MCF 10A (cell line): ENCODE measurements at regions of chr5 and their contacts with region 1.

Region 1: GRCh38 chr5:119302916-119303897 is 52.6 kb upstream of the TNFAIP8 start:
- DNase-seq: peak; percentile 94
- H3K4me3 Mint-ChIP-seq: peak overlapping the region; percentile 52
- H3K27ac Mint-ChIP-seq: peak overlapping the region; percentile 91
- H3K4me1 Mint-ChIP-seq: peaks cover 33% of the 10 kb centered on the region
- H3K27me3 Mint-ChIP-seq: no peaks in the 10 kb centered on the region
- CTCF ChIP-seq: no peak

Region 2: DNA sequence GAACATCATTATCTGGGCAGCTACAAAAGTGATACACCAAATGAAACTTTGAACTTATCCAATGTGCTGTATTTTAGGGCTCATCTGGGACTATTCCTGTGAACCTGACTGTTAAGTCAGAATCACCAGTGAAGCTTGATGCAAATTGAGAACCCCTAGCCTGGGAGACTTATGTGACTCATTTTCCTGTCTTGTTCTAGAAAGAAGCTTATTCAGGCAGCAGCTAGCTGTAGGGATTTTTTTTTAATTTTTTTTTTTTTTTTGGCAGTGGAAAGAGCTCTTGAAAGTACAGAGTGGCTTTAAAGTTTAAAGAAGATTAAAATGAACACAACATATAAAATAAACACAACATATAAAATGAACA is 28.5 kb before region 1 on chr5:
- CTCF ChIA-PET with region 1: interaction called, 4 read pairs
- POLR2A ChIA-PET with region 1: interaction called, 21 read pairs
- intact Hi-C with region 1: loop called (anchors 2 kb)
- DNase-seq: peak; percentile 80
- H3K4me3 Mint-ChIP-seq: no peak overlapping the region
- H3K27ac Mint-ChIP-seq: peak overlapping the region; percentile 80
- H3K4me1 Mint-ChIP-seq: peaks cover 35% of the 10 kb centered on the region
- H3K27me3 Mint-ChIP-seq: no peaks in the 10 kb centered on the region
- CTCF ChIP-seq: no peak

Region 3: DNA sequence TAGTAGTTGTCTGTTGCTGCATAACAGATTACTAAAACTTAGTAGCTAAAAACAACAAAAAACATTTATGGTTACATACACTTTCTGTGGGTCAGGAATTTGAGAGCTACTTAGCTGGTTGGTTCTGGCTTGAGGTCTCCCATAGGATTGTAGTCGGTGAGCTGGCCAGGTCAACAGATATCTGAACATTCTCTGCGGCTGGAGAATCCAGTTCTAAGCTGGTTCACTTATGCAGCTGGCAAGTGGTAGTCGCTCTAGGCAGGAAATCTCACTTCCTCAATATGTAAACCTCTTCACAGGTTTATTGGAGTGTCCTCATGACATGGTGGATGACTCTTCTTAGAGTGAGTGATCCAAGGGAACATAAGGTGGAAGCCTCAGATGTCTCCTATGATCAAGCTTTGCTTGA is 13.0 kb before region 1 on chr5:
- CTCF ChIA-PET with region 1: interaction called, 9 read pairs
- POLR2A ChIA-PET with region 1: interaction called, 27 read pairs
- intact Hi-C with region 1: no loop called
- DNase-seq: no peak
- H3K4me3 Mint-ChIP-seq: no peak overlapping the region
- H3K27ac Mint-ChIP-seq: no peak overlapping the region
- H3K4me1 Mint-ChIP-seq: peaks cover 42% of the 10 kb centered on the region
- H3K27me3 Mint-ChIP-seq: no peaks in the 10 kb centered on the region
- CTCF ChIP-seq: no peak

Region 4: GRCh38 chr5:119315516-119315949 is 12.3 kb after region 1 on chr5:
- CTCF ChIA-PET with region 1: interaction called, 32 read pairs
- POLR2A ChIA-PET with region 1: interaction called, 6 read pairs
- intact Hi-C with region 1: no loop called
- DNase-seq: peak; percentile 82
- H3K4me3 Mint-ChIP-seq: no peak overlapping the region
- H3K27ac Mint-ChIP-seq: no peak overlapping the region
- H3K4me1 Mint-ChIP-seq: no peaks in the 10 kb centered on the region
- H3K27me3 Mint-ChIP-seq: no peaks in the 10 kb centered on the region
- CTCF ChIP-seq: peak; percentile 39

Region 5: GRCh38 chr5:119322948-119323537 is 19.8 kb after region 1 on chr5:
- CTCF ChIA-PET with region 1: interaction called, 16 read pairs
- POLR2A ChIA-PET with region 1: interaction called, 16 read pairs
- intact Hi-C with region 1: no loop called
- DNase-seq: peak; percentile 54
- H3K4me3 Mint-ChIP-seq: no peak overlapping the region
- H3K27ac Mint-ChIP-seq: peak overlapping the region; percentile 98
- H3K4me1 Mint-ChIP-seq: peaks cover 44% of the 10 kb centered on the region
- H3K27me3 Mint-ChIP-seq: no peaks in the 10 kb centered on the region
- CTCF ChIP-seq: no peak

Region 6: DNA sequence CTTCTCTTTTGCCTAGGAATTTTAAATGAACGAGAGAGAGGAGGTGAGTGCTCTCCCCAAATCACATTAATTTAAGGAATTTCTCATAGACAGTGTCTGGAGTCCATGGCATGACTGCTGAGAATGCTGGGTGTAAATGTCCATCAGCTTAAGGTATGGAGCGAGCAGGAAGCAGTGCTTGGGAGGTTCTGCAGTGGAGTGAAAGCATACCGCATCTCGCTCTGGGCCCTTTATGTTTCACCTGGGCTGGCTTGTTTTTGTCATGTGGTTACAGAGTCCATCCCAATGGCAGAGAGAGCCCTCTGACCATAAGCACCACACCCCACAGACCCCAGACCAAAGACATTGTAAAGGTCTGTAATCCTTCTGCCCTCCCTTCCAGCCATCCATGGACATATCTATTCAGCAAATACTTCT is 32.1 kb after region 1 on chr5:
- CTCF ChIA-PET with region 1: interaction called, 10 read pairs
- POLR2A ChIA-PET with region 1: interaction called, 28 read pairs
- intact Hi-C with region 1: no loop called
- DNase-seq: no peak
- H3K4me3 Mint-ChIP-seq: peak overlapping the region; percentile 72
- H3K27ac Mint-ChIP-seq: peak overlapping the region; percentile 76
- H3K4me1 Mint-ChIP-seq: peaks cover 45% of the 10 kb centered on the region
- H3K27me3 Mint-ChIP-seq: no peaks in the 10 kb centered on the region
- CTCF ChIP-seq: no peak

Region 7: DNA sequence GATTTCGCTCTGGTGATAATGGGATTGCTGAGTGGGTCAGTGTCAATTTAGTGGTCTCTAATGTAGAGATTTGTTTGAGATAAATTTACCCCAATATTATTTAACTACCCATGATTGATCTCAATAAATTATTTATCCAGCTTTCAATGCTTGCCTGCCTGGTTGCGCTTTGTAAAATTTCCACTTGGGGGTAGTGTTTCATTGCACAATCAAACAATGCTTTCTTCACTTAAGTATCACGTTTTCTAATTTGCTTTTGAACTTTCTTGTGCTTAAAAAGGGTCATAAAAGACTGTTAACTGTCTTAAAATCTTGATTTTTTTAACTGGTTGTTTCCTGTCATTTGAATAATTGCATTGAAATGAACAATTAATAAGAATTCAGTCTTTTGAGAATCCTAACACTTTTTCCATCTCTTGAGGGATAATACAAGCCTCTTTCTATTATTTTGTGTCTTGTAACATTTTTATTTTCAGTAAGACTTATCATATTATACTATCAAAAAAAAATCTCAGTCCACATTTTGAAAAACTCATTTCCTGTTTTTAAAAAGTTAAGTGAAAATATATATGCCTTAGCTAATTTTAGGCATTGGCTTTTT is 167.7 kb after region 1 on chr5:
- CTCF ChIA-PET with region 1: no interaction called
- POLR2A ChIA-PET with region 1: no interaction called
- intact Hi-C with region 1: no loop called
- DNase-seq: peak; percentile 65
- H3K4me3 Mint-ChIP-seq: no peak overlapping the region
- H3K27ac Mint-ChIP-seq: peak overlapping the region; percentile 39
- H3K4me1 Mint-ChIP-seq: no peaks in the 10 kb centered on the region
- H3K27me3 Mint-ChIP-seq: no peaks in the 10 kb centered on the region
- CTCF ChIP-seq: peak; percentile 77

Region 8: DNA sequence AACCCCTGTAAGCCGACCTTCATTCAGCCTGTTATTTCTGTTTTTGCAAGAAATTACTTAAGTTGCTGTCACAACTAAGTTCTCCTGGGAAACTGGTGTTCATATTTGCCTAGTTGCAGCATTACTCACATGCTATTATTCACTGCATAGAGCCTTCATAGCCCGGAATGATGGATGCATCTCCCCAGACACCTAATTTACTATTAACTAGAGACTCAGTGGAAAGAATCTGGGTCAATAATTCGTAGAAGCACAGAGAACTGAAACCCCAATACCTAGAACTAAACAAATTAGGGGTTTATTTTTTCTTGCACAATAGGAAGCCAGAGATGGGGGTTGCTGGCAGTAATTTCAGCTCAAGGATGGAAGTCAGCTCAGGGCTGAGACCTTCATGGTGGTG is 280.5 kb after region 1 on chr5:
- CTCF ChIA-PET with region 1: no interaction called
- POLR2A ChIA-PET with region 1: no interaction called
- intact Hi-C with region 1: no loop called
- DNase-seq: no peak
- H3K4me3 Mint-ChIP-seq: no peak overlapping the region
- H3K27ac Mint-ChIP-seq: no peak overlapping the region
- H3K4me1 Mint-ChIP-seq: no peaks in the 10 kb centered on the region
- H3K27me3 Mint-ChIP-seq: no peaks in the 10 kb centered on the region
- CTCF ChIP-seq: no peak